Prostate gland (tissue), 2 donors: ENCODE measurements at regions of chr10 and their contacts with region 1.

Region 1: DNA sequence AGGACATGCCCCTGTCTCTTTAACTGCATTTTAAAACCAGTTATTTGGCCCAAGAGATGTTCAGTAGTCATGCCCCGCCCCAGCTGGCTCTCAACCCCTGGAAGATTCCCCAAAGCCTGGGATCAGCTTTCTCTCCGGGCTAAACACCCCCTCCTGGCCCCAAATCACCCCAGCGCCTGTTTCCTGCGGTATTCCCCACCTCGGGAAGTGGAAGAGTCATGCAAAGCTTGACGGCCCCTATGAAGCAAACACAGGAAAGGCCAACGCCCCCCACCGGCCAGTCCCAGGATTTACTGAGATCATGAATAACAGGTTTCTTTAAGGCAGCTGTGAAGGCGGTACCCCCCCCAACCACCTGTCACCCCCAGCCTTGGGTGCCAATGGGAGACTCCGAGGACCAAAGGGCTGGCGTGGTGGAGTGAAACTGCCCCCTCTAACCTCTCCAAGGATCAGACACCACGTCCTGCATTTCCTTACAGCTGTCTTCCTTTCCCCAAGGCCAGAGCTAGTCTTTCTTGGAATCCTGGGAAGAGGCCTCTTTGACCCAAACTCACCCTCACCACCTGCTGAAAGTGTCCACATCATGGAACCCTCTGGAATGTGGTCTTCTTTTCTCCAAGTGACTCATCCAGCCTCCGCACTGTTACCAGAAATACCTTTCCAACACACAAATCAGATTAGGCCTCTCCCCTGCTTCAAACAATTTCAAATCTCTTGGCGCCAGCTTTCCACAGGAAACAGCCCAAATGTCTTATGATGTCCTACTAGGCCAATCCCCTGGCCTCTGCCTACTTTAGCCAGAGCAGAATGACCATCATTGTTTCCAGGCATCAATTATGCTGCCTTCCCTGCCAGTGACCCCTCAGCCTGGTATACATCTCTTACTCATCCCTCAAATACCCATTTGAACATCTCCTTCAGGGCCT is 301.5 kb downstream of the ZEB1 start:
- DNase-seq: no peak
- H3K4me3 ChIP-seq: no peak overlapping the region
- H3K27ac ChIP-seq: no peak overlapping the region
- H3K4me1 ChIP-seq: no peaks in the 10 kb centered on the region
- H3K27me3 ChIP-seq: no peaks in the 10 kb centered on the region
- CTCF ChIP-seq: peak in 1 of 4 experiments; percentile 17
- POLR2A ChIP-seq: no peak

Region 2: DNA sequence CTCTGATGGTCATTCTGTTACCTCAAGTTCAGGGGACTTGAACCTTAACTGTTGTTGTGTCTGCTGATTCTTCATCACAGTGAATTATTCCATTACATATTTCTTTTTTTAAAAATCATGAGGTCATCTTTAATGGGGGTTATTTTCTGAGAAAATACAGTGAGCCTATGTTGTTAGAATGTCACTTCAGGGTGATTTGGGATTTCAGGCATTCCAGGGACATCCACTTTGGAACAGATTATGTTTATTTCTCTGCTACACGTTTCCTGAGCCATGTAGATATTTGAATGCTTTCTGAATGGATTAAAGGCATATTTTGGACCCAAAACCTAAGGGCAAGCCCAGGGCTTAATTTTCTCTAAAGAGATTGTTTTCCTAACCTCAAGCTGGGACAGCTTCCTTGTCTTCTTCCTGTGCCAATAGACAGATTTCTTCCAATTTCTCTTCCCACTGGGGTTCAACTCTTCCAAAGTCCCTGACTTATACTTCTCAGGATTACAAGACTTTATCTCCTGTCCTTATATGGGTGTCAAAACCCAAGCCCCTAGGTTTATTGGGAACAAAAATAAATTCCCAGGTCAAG is 36.5 kb after region 1 on chr10:
- intact Hi-C with region 1: loop called (anchors 5 kb)
- DNase-seq: no peak
- H3K4me3 ChIP-seq: no peak overlapping the region
- H3K27ac ChIP-seq: no peak overlapping the region
- H3K4me1 ChIP-seq: no peaks in the 10 kb centered on the region
- H3K27me3 ChIP-seq: no peaks in the 10 kb centered on the region
- CTCF ChIP-seq: no peak
- POLR2A ChIP-seq: no peak

Region 3: GRCh38 chr10:31847515-31847914 is 227.0 kb after region 1 on chr10:
- intact Hi-C with region 1: no loop called
- DNase-seq: no peak
- H3K4me3 ChIP-seq: no peak overlapping the region
- H3K27ac ChIP-seq: no peak overlapping the region
- H3K4me1 ChIP-seq: no peaks in the 10 kb centered on the region
- H3K27me3 ChIP-seq: no peaks in the 10 kb centered on the region
- CTCF ChIP-seq: no peak
- POLR2A ChIP-seq: no peak